Activated T-helper 1 cell treated with anti-CD3 and anti-CD28 coated beads, Interleukin-12 subunit alpha, Interleukin-12 subunit beta, Interleukin-2, Interleukin-4 antibody, amounts not matched to agents 30 ng/mL and 10 ng/mL and 1 ng/mL, durations not matched to agents 14 hours and 24 hours and 36 hours (primary cell): ENCODE measurements at regions of chr1 and their contacts with region 1.

Region 1: GRCh38 chr1:93078986-93079654 is at the start of gene MTF2:
- DNase-seq: peak; percentile 93
- H3K4me3 Mint-ChIP-seq: peak within 1 kb of the TSS; percentile 98
- H3K27ac Mint-ChIP-seq: peak within 1 kb of the TSS; percentile 95
- H3K4me1 Mint-ChIP-seq: peaks cover 58% of the 10 kb centered on the region
- H3K27me3 Mint-ChIP-seq: no peaks in the 10 kb centered on the region
- total RNA-seq, gene MTF2: 68.4 and 71.0 TPM in 2 replicates

Region 2: DNA sequence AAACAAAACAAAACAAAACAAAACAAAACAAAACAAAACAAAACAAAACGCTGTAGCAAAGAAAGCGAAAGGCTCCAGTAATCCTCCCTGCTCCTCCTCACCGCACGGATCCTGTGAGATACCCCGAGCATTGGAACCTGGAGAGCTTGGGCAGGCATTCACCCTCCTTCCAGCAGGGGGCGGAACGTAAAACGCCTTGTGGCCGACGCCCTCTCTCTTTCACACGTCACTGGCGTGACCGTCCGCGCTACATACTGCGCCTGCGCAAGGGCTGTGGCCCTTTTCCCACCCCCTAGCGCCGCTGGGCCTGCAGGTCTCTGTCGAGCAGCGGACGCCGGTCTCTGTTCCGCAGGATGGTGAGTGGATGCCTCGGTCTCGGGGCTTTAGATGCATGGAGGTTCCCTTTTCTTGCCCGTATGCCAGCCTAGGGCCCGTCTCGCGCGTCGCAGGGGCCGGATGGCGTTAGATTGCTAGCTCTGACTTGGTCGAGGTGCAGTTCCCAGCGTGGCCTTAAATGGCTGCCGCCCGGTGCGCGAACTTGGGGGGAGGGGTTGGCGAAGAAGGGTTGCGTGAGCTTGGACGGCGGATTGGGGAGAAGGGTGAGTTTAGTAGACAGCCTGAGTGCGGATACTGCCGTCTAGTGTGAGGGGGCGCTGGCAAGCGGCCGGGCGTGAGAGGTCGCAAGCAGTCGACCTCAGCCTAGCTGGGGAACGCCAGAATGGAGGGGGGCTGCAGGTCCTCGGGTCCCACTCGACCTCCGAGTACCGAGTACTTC is 247.2 kb before region 1 on chr1 and contains the start of gene RPL5:
- intact Hi-C with region 1: loop called (anchors 1 kb)
- DNase-seq: peak; percentile 96
- H3K4me3 Mint-ChIP-seq: peak within 1 kb of the TSS; percentile 96
- H3K27ac Mint-ChIP-seq: peak within 1 kb of the TSS; percentile 97
- H3K4me1 Mint-ChIP-seq: peaks cover 35% of the 10 kb centered on the region
- H3K27me3 Mint-ChIP-seq: peaks cover 2% of the 10 kb centered on the region
- total RNA-seq, gene RPL5: 1,115 and 1,120 TPM in 2 replicates

Region 3: DNA sequence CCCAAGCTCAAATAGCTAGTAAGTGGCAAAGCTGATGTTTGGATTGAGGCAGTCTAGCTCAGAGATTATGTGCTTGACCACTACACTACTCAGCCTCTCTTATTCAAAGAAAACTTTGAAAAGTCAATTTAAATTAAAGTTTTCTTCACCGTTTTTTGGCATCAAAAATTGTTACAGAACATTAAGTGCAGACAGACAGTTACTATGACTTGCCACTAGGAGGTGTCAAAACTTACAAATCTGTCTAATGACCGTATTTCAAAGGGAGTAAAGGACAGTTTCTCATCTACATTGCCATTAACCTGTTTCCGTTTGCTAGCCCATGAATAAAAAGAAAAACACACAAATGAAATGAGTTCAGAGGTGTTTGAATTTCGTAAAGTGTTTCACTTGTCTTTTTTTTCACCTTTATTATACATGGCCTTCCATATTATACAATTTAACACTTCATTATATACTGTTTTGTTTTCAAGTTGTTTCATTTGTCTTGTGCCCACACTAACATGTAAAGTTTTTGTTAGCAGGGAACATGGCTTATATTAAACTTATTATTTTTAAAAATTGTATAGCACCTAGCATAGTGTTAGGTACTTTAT is 57.5 kb before region 1 on chr1:
- intact Hi-C with region 1: loop called (anchors 1 kb)
- DNase-seq: no peak
- H3K4me3 Mint-ChIP-seq: no peak overlapping the region
- H3K27ac Mint-ChIP-seq: no peak overlapping the region
- H3K4me1 Mint-ChIP-seq: peaks cover 6% of the 10 kb centered on the region
- H3K27me3 Mint-ChIP-seq: peaks cover 36% of the 10 kb centered on the region

Region 4: GRCh38 chr1:93129507-93130099 is 50.5 kb after region 1 on chr1:
- intact Hi-C with region 1: loop called (anchors 5 kb)
- DNase-seq: no peak
- H3K4me3 Mint-ChIP-seq: no peak overlapping the region
- H3K27ac Mint-ChIP-seq: no peak overlapping the region
- H3K4me1 Mint-ChIP-seq: no peaks in the 10 kb centered on the region
- H3K27me3 Mint-ChIP-seq: no peaks in the 10 kb centered on the region